ENCODE measurements at regions of chr3 and their contacts with region 1.

Region 1: GRCh38 chr3:9862391-9863057 is 17.5 kb downstream of the CIDEC start:
- DNase-seq: no peak
- H3K4me3 Mint-ChIP-seq: no peak overlapping the region
- H3K27ac Mint-ChIP-seq: peak overlapping the region; percentile 59
- H3K4me1 Mint-ChIP-seq: peaks cover 16% of the 10 kb centered on the region
- H3K27me3 Mint-ChIP-seq: no peaks in the 10 kb centered on the region
- CTCF ChIP-seq: no peak

Region 2: GRCh38 chr3:9890249-9891071 is 27.9 kb after region 1 on chr3 and contains the start of gene JAGN1:
- CTCF ChIA-PET with region 1: interaction called, 4 read pairs
- POLR2A ChIA-PET with region 1: interaction called, 70 read pairs
- intact Hi-C with region 1: no loop called
- DNase-seq: peak; percentile 90
- H3K4me3 Mint-ChIP-seq: peak within 1 kb of the TSS; percentile 91
- H3K27ac Mint-ChIP-seq: peak within 1 kb of the TSS; percentile 98
- H3K4me1 Mint-ChIP-seq: peaks cover 45% of the 10 kb centered on the region
- H3K27me3 Mint-ChIP-seq: no peaks in the 10 kb centered on the region
- CTCF ChIP-seq: no peak
- total RNA-seq, gene JAGN1: 49.7 and 55.4 TPM in 2 replicates

Region 3: GRCh38 chr3:9897408-9898372 is 35.2 kb after region 1 on chr3:
- CTCF ChIA-PET with region 1: interaction called, 3 read pairs
- POLR2A ChIA-PET with region 1: interaction called, 17 read pairs
- intact Hi-C with region 1: no loop called
- DNase-seq: peak; percentile 96
- H3K4me3 Mint-ChIP-seq: peak overlapping the region; percentile 33
- H3K27ac Mint-ChIP-seq: peak overlapping the region; percentile 79
- H3K4me1 Mint-ChIP-seq: peaks cover 59% of the 10 kb centered on the region
- H3K27me3 Mint-ChIP-seq: no peaks in the 10 kb centered on the region
- CTCF ChIP-seq: no peak